Adrenal gland (tissue), 19 donors: ENCODE measurements at regions of chr2 and their contacts with region 1.

Region 1: GRCh38 chr2:55961318-55961911 is 37.8 kb upstream of the EFEMP1 start:
- DNase-seq: peak in 2 of 7 donors; percentile 23 to 35
- H3K4me3 ChIP-seq: no peak overlapping the region
- H3K27ac ChIP-seq: no peak overlapping the region
- H3K4me1 ChIP-seq: peaks cover 6 to 11% of the 10 kb centered on the region in 2 donors
- H3K27me3 ChIP-seq: no peaks in the 10 kb centered on the region
- CTCF ChIP-seq: peak; percentile 45 to 71 (median 60)
- POLR2A ChIP-seq: no peak

Region 2: DNA sequence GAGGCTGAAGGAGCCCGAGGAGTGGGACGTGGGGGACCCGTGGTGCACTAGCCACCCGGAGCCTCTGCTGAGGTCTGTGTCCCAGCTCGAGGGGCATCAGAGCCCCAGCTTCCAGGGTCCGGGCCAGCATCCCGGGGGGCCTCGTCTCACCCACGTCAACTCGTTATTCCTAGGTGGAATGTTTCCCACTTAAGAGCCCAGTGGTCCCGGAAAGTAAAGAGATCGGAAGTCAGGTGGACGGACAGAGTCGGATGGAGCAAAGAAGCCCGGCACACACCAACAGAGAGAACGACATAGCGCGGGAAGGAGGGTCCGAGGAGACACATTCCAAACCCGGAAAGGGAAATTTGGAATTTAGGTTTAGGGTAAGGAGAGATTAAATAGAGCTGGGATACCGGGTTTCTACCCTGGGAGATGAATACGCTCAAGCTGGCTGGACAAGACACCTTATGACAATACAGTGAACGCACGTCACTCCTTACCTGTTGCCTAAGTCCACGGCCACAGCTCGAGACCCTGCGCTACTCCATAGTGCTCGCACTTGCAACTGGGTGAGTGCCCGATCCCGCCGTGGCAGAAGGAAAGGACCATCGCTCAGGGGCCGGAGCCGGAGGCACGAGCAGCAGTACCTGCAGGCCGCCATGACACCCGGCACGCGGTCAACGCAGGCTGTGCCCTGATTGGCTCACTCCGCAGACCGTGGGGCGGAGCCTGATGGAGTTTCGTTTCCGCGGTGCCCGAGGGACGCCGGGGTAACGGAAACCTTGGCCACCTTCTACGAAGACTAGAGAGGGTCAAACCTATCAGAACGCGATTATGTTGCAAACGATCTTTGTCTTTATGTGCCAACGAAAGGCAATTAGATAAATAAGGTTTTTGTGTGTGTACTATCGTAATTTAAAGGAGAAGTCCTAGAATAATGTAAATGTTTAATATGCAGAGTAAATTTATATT is 268.0 kb before region 1 on chr2 and contains the start of gene PNPT1:
- intact Hi-C with region 1: no loop called
- DNase-seq: peak; percentile 94 to 97 (median 96)
- H3K4me3 ChIP-seq: peak within 1 kb of the TSS; percentile 63 to 83 (median 70)
- H3K27ac ChIP-seq: peak within 1 kb of the TSS in 1 of 5 donors; percentile 15
- H3K4me1 ChIP-seq: peaks cover 9 to 14% of the 10 kb centered on the region in 2 donors
- H3K27me3 ChIP-seq: no peaks in the 10 kb centered on the region
- CTCF ChIP-seq: no peak
- POLR2A ChIP-seq: peak in 1 of 2 donors; percentile 33
- total RNA-seq, gene PNPT1: 7.0 to 30.0 (median 23.5) TPM

Region 3: DNA sequence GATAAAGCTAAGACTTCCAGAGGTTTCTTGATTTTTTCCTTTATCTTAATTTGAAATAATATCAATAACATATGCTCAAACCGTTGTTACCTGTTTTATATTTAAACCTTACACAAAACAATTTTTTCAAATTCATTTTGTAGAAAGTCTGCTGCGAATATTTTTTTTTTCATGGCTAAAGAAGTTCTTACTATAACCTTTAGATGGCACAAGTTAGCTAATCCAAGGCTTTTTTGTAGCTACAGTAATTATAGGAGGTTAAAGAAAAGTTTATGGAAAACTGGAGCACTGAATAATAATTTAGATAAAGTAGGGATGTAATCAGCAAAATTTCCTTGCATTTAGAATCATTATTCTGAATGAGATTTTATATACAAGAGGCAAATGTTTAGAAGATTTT is 189.8 kb before region 1 on chr2:
- intact Hi-C with region 1: loop called in 1 of 2 experiments (anchors 5 kb)
- DNase-seq: no peak
- H3K4me3 ChIP-seq: no peak overlapping the region
- H3K27ac ChIP-seq: no peak overlapping the region
- H3K4me1 ChIP-seq: no peaks in the 10 kb centered on the region
- H3K27me3 ChIP-seq: no peaks in the 10 kb centered on the region
- CTCF ChIP-seq: peak; percentile 56 to 91 (median 69)
- POLR2A ChIP-seq: no peak

Region 4: DNA sequence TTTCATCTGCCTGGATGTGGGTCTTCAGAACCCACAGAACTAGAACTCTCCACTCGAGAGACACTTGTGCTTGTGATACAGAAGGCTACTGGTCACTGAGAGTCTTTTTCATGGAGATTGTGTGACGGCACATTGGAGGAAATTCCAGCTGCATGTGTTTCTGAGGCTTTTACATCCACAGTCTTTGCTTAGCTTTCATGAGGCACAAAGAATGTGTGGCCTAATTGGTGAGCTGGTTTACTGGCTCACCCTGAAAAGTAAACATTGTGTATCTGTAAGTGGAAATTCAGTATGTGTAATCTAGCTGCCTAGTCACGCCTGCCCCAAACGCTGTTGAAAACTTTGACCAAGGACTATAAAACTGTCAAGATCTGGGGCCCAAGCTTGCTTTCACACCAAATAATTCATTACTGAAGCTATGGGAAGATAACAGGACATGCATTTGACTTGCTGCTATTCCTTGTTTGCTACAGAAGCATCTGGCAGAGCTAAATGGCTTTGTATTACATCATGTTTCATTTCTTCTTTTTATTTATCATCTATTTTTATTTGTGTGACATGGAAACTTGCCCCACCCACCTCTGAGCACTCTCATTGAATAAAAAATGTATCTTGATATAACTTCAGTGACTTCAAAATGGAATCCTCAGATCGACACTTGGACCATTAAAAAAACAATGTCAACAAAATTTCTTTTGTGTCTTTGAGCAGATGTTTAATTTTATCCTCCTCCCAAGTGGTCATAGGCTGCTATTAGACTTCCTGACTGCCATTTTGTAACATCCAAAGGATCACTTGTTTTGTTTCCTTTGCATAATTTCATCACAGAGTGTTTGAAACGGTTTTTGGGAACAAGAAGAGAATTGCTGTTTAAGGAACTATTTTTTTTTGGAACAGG is 118.1 kb before region 1 on chr2:
- intact Hi-C with region 1: no loop called
- DNase-seq: no peak
- H3K4me3 ChIP-seq: no peak overlapping the region
- H3K27ac ChIP-seq: peak overlapping the region in 1 of 5 donors; percentile 9
- H3K4me1 ChIP-seq: peaks cover 0 to 5% of the 10 kb centered on the region in 2 donors
- H3K27me3 ChIP-seq: no peaks in the 10 kb centered on the region
- CTCF ChIP-seq: no peak
- POLR2A ChIP-seq: no peak